A673 (cell line): ENCODE measurements at regions of chr4 and their contacts with region 1.

Region 1: DNA sequence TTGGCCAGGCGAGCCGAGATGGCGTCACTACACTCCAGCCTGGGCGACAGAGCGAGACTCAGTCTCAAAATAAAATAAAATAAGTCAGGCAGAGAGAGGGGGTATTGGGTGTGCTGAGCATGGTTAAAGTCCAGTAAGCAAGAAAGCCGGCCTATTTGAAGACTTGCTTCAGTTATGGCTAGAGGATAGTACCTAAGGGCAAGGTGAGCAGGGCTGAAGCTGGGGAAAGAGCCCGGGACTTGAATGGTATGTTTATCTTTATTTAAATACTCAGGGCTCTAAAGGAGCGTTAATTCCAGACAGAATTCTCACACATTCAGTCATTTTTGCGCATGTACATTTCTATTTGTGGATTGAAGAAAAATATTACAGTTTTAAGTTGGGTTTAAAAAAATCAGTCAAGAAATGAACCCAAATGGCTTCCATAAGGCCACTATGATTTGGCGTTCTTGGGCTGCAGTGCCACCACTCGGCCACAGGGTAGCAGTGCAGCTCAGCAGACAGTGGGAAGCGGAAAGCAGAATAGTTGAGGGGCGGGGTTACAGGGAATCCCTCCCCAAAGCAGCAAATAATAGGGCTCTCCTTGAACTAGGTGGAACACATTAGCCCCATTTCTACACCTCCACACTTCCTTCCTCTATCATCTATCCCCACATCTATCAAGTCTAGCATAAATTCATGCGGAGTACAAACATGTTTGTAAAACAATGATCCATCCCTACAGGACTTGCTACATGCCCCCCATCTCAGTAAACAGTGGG is 37.2 kb upstream of the SH3D19 start:
- DNase-seq: peak; percentile 89
- H3K4me3 ChIP-seq: no peak overlapping the region
- H3K27ac ChIP-seq: no peak overlapping the region
- H3K4me1 ChIP-seq: no peaks in the 10 kb centered on the region
- H3K27me3 ChIP-seq: peaks cover 5% of the 10 kb centered on the region
- CTCF ChIP-seq: peak; percentile 99

Region 2: DNA sequence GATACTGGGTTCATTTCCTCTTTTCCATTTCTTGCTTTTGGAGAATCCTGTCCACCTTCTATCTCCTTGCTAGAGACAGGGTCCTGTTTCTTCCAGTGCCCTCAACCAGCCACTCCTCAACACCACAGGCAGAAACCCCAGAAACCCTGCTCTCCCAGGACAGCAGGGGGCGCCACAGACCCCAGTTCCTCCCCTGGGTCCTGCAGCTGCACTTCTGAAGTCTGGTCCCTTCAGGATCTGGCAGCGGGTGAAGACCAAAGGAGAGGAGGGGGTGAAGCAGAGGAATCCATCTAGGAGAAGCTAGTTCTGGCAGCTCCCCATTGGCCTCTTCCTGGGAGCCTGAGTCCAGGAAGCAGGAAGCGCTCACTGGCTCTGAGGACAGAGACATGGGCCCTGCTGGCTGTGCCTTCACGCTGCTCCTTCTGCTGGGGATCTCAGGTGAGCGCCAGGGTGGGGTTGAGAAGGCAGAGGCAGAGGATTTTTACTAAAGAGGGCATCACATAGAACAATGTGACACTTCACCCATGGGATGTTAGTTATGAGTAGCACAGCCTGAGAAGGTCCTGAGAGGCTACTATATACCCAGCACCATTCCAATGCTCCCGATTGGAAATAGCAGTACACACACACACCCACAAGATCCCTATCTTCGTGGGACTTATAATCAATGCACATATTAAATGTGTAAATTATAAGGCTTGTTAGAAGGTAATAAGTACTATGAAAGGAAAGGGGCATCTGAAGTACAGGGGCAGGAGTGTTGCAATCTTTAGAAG is 85.6 kb before region 1 on chr4 and contains the start of gene PRSS48:
- CTCF ChIA-PET with region 1: no interaction called
- POLR2A ChIA-PET with region 1: no interaction called
- intact Hi-C with region 1: loop called (anchors 2 kb)
- DNase-seq: peak; percentile 74
- H3K4me3 ChIP-seq: no peak within 1 kb of the TSS
- H3K27ac ChIP-seq: no peak within 1 kb of the TSS
- H3K4me1 ChIP-seq: no peaks in the 10 kb centered on the region
- H3K27me3 ChIP-seq: no peaks in the 10 kb centered on the region
- CTCF ChIP-seq: peak; percentile 89
- total RNA-seq, gene PRSS48: not detected in 2 replicates

Region 3: GRCh38 chr4:151604238-151604637 is 241.7 kb after region 1 on chr4:
- CTCF ChIA-PET with region 1: interaction called, 5 read pairs
- POLR2A ChIA-PET with region 1: no interaction called
- intact Hi-C with region 1: loop called (anchors 2 kb)
- DNase-seq: peak; percentile 37
- H3K4me3 ChIP-seq: no peak overlapping the region
- H3K27ac ChIP-seq: no peak overlapping the region
- H3K4me1 ChIP-seq: no peaks in the 10 kb centered on the region
- H3K27me3 ChIP-seq: no peaks in the 10 kb centered on the region
- CTCF ChIP-seq: peak; percentile 57

Region 4: DNA sequence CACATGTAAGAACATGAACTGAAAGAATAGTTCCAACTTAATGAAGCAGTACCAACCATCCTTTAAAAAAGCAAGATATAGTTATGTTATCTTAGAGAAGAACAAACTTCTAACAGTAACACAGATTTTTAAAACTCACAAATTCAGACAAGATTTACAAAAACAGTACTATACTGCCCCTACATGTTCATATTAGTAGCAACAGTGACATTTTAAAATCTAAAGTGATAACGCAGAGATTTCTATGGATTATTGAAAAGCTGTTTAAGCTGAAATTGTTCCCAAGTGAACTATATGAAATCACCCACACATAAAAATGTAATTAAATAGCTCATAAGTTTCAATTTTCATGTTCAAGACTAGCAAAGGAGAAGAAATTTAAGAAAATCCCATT is 1007.3 kb after region 1 on chr4:
- CTCF ChIA-PET with region 1: no interaction called
- POLR2A ChIA-PET with region 1: no interaction called
- intact Hi-C with region 1: loop called (anchors 5 kb)
- DNase-seq: peak; percentile 21
- H3K4me3 ChIP-seq: no peak overlapping the region
- H3K27ac ChIP-seq: no peak overlapping the region
- H3K4me1 ChIP-seq: peaks cover 27% of the 10 kb centered on the region
- H3K27me3 ChIP-seq: no peaks in the 10 kb centered on the region
- CTCF ChIP-seq: peak; percentile 56